Activated CD8-positive, alpha-beta T cell treated with anti-CD3 and anti-CD28 coated beads for 36 hours (primary cell): ENCODE measurements at regions of chr19 and their contacts with region 1.

Region 1: DNA sequence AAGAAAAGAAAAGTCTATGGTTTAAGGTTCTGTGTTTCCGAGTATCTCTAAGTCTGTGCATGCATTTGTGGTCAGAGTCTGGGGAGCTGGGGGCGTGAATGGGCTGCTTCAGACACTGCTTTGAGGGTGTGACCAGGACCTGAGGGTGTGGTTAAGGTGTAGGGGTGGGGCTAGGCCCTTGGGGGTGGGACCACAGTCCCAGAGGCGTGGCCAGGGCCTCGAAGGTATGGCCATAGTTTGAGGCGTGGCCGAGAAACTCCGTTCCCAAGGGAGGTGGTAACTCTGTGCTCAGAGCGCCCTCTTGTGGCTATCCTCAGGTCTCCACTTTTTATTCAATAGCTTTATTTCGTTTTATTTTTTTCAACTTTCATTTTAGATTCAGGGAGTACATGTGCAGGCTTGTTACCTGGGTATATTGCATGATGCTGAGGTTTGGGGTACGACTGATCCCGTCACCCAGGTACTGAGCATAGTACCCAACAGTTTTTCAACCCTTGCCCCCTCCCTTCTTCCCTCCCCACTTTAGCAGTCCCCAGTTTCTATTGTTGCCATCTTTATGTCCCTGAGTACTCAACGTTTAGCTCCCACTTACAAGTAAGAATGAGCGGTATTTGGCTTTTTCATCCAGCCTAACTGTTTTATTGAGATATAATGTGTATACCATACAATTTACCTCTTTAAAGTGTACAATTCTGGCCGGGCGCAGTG is 7.0 kb upstream of the CBLC start:
- DNase-seq: peak; percentile 99
- ATAC-seq: peak; percentile 100
- H3K4me3 Mint-ChIP-seq: peak overlapping the region; percentile 28
- H3K27ac Mint-ChIP-seq: peak overlapping the region; percentile 80
- H3K4me1 Mint-ChIP-seq: peaks cover 22% of the 10 kb centered on the region
- H3K27me3 Mint-ChIP-seq: no peaks in the 10 kb centered on the region
- CTCF ChIP-seq: peak; percentile 58

Region 2: DNA sequence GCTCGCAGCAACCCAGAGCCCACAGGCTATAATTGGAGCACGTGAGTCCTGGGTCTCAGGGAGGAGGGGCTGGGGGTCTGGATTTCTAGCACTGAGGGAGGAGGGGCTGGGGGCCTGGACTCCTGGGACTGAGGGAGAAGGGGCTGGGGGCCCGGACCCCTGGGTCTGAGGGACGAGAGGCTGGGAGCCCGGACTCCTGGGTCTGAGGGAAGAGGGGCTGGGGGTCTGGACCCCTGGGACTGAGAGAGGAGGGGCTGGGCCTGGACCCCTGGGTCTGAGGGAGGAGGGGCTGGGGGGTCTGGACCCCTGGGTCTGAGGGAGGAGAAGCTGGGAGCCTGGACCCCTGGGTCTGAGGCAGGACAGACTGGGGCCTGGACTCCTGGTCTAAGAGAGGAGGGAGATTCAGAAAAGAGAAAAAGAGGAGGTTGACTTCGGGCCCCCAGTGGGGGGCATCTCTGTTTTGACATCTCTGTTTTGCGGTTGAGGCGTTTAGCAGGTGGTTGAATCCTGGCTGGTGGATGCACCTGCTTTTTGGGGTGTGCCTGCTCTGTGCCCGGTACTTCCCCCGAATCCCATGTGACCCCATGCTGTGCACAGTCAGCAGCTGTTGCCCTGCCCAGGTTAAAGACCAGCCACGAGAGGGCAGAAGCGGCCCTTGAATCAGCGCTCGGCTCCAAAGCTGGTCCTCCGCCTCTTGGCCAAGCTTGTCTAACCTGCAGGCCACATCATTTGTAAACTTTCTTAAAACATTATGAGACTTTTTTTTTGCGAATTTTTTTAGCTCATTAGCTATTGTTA is 116.5 kb before region 1 on chr19:
- CTCF ChIA-PET with region 1: interaction called, 33 read pairs
- POLR2A ChIA-PET with region 1: no interaction called
- intact Hi-C with region 1: no loop called
- DNase-seq: peak; percentile 88
- ATAC-seq: peak; percentile 95
- H3K4me3 Mint-ChIP-seq: no peak overlapping the region
- H3K27ac Mint-ChIP-seq: no peak overlapping the region
- H3K4me1 Mint-ChIP-seq: peaks cover 12% of the 10 kb centered on the region
- H3K27me3 Mint-ChIP-seq: no peaks in the 10 kb centered on the region
- CTCF ChIP-seq: peak; percentile 75

Region 3: DNA sequence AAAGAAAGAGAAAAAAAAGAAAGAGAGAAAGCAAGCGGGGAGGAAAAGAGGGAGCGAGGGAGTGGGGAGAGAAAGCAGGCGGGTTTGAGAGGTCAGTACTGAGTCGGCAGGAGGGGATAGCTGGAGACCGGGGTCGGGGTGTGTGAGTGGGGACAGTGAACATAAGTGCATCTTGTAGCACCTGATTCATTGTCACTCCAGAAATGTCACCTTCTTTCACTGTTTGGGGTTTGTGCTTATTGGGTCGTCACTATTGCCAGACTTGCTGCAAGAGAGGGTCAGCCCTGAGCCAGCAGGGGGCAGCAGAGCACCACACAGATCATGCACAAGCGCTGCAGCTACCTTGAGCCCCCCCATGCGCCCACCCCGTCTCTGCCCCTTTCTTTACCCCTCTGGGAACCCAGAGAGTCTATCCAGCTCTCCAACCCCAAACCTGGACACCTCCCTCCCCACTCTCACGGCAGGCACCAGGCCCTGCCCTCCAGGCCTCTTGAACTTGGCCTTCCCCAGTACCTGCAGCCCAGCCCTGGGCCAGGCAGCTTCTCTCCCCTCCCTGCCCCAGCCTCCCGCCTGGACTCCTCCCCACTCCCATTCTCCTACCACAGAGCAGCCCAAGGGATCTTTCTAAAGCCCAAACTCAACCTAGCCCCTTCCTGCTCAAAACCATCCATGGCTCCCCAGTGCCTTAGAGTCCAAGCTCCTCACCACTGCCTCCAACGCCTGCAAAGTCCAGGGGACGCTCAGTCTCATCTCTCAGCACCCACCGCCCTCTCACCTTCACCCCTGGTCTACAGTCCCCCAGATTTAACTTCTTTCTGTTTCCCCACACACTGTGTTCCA is 81.4 kb before region 1 on chr19:
- CTCF ChIA-PET with region 1: interaction called, 79 read pairs
- POLR2A ChIA-PET with region 1: interaction called, 3 read pairs
- intact Hi-C with region 1: loop called (anchors 2 kb)
- DNase-seq: peak; percentile 90
- ATAC-seq: peak; percentile 46
- H3K4me3 Mint-ChIP-seq: no peak overlapping the region
- H3K27ac Mint-ChIP-seq: no peak overlapping the region
- H3K4me1 Mint-ChIP-seq: peaks cover 43% of the 10 kb centered on the region
- H3K27me3 Mint-ChIP-seq: peaks cover 21% of the 10 kb centered on the region
- CTCF ChIP-seq: peak; percentile 91

Region 4: DNA sequence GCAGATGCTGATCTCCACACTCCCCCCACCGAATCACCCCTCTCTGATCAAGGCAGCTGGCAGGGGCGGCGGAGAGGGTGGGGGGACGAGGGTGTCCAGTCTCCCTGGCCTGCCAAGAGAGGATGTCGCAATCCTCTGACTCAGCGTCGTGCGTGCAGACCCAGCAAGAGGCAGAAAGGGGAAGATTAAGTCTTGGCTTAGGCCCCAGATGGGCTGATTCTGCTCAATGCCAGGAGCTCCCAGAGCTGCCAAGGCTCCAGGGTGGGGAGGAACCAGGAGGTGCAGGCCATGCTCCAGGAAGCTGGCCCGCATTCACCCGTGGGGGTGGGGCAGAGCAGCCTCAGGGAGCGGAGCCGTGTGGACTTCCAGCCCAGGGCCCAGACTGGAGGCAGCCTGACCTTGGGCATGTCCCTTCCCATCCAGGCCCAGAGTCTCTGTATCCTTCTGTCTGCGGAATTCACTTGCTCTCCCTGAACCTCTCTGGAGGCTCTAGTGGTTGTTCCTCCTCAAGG is 28.8 kb before region 1 on chr19:
- CTCF ChIA-PET with region 1: interaction called, 43 read pairs
- POLR2A ChIA-PET with region 1: interaction called, 4 read pairs
- intact Hi-C with region 1: no loop called
- DNase-seq: peak; percentile 46
- ATAC-seq: peak; percentile 49
- H3K4me3 Mint-ChIP-seq: no peak overlapping the region
- H3K27ac Mint-ChIP-seq: peak overlapping the region; percentile 46
- H3K4me1 Mint-ChIP-seq: peaks cover 17% of the 10 kb centered on the region
- H3K27me3 Mint-ChIP-seq: no peaks in the 10 kb centered on the region
- CTCF ChIP-seq: no peak

Region 5: DNA sequence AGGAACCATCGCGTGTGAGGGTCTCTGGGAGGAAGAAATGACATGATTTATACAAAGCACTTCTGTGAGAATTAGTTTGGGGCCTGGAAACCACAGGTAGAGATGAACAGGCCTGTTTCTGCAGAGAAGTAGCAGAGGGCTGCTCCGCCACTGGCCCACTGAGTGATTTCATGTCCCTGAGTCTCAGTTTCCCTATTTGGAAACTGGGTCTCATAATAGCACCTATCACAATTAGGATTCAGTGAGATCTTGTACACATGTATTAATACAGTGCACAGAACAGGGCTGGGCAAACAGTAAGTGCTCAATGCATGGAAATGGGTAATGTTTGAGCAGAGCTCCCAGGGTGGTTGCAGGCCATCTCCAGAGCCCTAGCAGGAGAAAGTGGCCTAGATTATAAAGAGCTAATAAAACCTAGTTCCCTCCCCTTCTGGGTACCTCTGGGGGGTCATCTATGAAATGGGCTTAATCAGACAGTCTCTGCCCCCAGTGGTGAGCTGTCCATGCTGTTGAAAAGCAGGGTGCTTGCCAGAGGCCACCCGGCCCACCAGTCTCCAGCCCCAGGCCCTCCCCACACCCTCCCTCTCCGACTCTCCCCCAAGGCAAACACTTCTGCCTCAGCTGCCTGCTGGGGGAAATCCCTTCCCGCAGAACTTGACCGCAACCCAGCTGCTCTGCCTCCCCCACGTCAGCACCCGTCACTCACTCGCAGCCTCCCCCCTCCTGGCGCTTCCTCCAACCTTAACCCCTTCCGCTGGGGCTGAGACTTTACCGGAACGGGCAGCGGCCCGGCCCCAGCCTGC is 17.7 kb before region 1 on chr19:
- CTCF ChIA-PET with region 1: interaction called, 18 read pairs
- POLR2A ChIA-PET with region 1: interaction called, 9 read pairs
- intact Hi-C with region 1: no loop called
- DNase-seq: peak; percentile 97
- ATAC-seq: peak; percentile 85
- H3K4me3 Mint-ChIP-seq: peak overlapping the region; percentile 91
- H3K27ac Mint-ChIP-seq: peak overlapping the region; percentile 98
- H3K4me1 Mint-ChIP-seq: peaks cover 51% of the 10 kb centered on the region
- H3K27me3 Mint-ChIP-seq: no peaks in the 10 kb centered on the region
- CTCF ChIP-seq: no peak

Region 6: GRCh38 chr19:44782729-44783128 is 12.0 kb after region 1 on chr19:
- CTCF ChIA-PET with region 1: interaction called, 30 read pairs
- POLR2A ChIA-PET with region 1: no interaction called
- intact Hi-C with region 1: no loop called
- DNase-seq: no peak
- ATAC-seq: no peak
- H3K4me3 Mint-ChIP-seq: no peak overlapping the region
- H3K27ac Mint-ChIP-seq: no peak overlapping the region
- H3K4me1 Mint-ChIP-seq: peaks cover 4% of the 10 kb centered on the region
- H3K27me3 Mint-ChIP-seq: peaks cover 4% of the 10 kb centered on the region
- CTCF ChIP-seq: no peak